ENCODE measurements at regions of chr4 and their contacts with region 1.

Region 1: GRCh38 chr4:68349649-68350360 is at the start of gene YTHDC1:
- DNase-seq: peak; percentile 96
- ATAC-seq: peak; percentile 97
- H3K4me3 ChIP-seq: peak within 1 kb of the TSS; percentile 78
- H3K27ac ChIP-seq: peak within 1 kb of the TSS; percentile 86
- H3K4me1 ChIP-seq: peaks cover under 1% of the 10 kb centered on the region; the same call in 1 of the 2 replicates
- H3K27me3 ChIP-seq: no peaks in the 10 kb centered on the region
- CTCF ChIP-seq: 0 out of 2 replicates have a peak, but pooled peaks have one; percentile 10
- POLR2A ChIP-seq: peak; percentile 93
- RAD21 ChIP-seq: no peak
- total RNA-seq, gene YTHDC1: 31.9 and 43.9 TPM in 2 replicates

Region 2: GRCh38 chr4:68338608-68339007 is 11.2 kb before region 1 on chr4:
- CTCF ChIA-PET with region 1: interaction called, 3 read pairs
- POLR2A ChIA-PET with region 1: no interaction called
- dilution Hi-C with region 1: no loop called
- in situ Hi-C with region 1: no loop called
- intact Hi-C with region 1: loop called (anchors 1 kb)
- DNase-seq: no peak
- ATAC-seq: 0 out of 2 replicates have a peak, but pooled peaks have one; percentile 42
- H3K4me3 ChIP-seq: no peak overlapping the region
- H3K27ac ChIP-seq: peak overlapping the region; percentile 23; the same call in 1 of the 2 replicates
- H3K4me1 ChIP-seq: peaks cover 10% of the 10 kb centered on the region
- H3K27me3 ChIP-seq: no peaks in the 10 kb centered on the region
- CTCF ChIP-seq: no peak
- POLR2A ChIP-seq: no peak
- RAD21 ChIP-seq: no peak

Region 3: GRCh38 chr4:68361146-68361589 is 11.4 kb after region 1 on chr4:
- CTCF ChIA-PET with region 1: interaction called, 3 read pairs
- POLR2A ChIA-PET with region 1: no interaction called
- dilution Hi-C with region 1: no loop called
- in situ Hi-C with region 1: no loop called
- intact Hi-C with region 1: loop called (anchors 1 kb)
- DNase-seq: peak; percentile 70
- ATAC-seq: peak; percentile 70
- H3K4me3 ChIP-seq: no peak overlapping the region
- H3K27ac ChIP-seq: peak overlapping the region; percentile 30; the same call in 1 of the 2 replicates
- H3K4me1 ChIP-seq: peaks cover 6% of the 10 kb centered on the region
- H3K27me3 ChIP-seq: no peaks in the 10 kb centered on the region
- CTCF ChIP-seq: no peak
- POLR2A ChIP-seq: no peak
- RAD21 ChIP-seq: no peak

Region 4: DNA sequence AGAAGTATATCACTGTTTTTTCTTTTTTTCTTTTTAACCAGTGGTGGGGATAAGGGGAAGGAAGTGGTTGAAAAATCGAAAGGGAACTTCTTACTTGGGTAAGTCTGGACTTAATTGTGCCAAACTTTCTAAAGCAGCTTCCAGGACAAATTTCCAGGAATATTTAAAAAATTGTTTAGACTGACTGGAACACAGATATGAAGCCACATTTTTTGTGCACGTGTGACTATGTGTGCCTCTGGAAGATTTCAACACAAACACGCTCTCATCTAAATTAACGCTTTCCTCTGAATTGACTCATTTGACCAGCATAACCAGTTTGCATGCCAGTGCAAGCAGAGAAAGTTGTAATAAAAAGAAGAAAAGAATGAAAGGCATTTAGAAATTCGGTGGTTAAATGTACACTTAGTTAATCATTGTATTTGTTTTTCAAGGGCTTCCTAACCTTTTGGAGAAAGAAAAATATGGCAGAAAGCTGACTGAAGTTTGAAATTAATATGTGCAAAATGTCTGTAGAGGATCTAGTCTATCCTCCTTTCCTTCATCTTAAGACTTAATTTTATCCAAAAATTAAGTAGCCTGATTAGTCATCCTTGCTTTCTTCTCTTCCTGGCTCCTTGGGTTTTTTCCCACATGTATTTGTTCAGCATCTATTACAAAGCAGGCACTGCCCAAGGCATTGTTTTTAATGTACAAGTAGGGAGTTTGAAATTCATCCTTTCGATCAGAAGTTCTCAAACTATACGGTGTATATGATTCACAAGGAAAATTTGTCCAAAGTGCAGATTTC is 19.1 kb after region 1 on chr4:
- CTCF ChIA-PET with region 1: interaction called, 6 read pairs
- POLR2A ChIA-PET with region 1: no interaction called
- dilution Hi-C with region 1: no loop called
- in situ Hi-C with region 1: no loop called
- intact Hi-C with region 1: loop called (anchors 2 kb)
- DNase-seq: peak; percentile 69
- ATAC-seq: peak; percentile 68
- H3K4me3 ChIP-seq: no peak overlapping the region
- H3K27ac ChIP-seq: peak overlapping the region; percentile 83; the same call in 1 of the 2 replicates
- H3K4me1 ChIP-seq: peaks cover 14% of the 10 kb centered on the region
- H3K27me3 ChIP-seq: no peaks in the 10 kb centered on the region
- CTCF ChIP-seq: no peak
- POLR2A ChIP-seq: no peak
- RAD21 ChIP-seq: no peak

Region 5: GRCh38 chr4:68693325-68694075 is 343.7 kb after region 1 on chr4:
- CTCF ChIA-PET with region 1: no interaction called
- POLR2A ChIA-PET with region 1: no interaction called
- dilution Hi-C with region 1: no loop called
- in situ Hi-C with region 1: no loop called
- intact Hi-C with region 1: no loop called
- DNase-seq: no peak
- ATAC-seq: no peak
- H3K4me3 ChIP-seq: no peak overlapping the region
- H3K27ac ChIP-seq: no peak overlapping the region
- H3K4me1 ChIP-seq: no peaks in the 10 kb centered on the region
- H3K27me3 ChIP-seq: no peaks in the 10 kb centered on the region
- CTCF ChIP-seq: no peak
- POLR2A ChIP-seq: no peak
- RAD21 ChIP-seq: no peak

Measured in IMR-90 (cell line).